GM10248 (cell line): ENCODE measurements at regions of chr17 and their contacts with region 1.

Region 1: GRCh38 chr17:32877164-32877764 is 340 bp upstream of the MYO1D start:
- DNase-seq: peak; percentile 96
- CTCF ChIP-seq: peak; percentile 89

Region 2: GRCh38 chr17:32486111-32486700 is 391.1 kb before region 1 on chr17:
- CTCF ChIA-PET with region 1: interaction called, 66 read pairs
- POLR2A ChIA-PET with region 1: no interaction called
- DNase-seq: peak; percentile 91
- CTCF ChIP-seq: no peak

Region 3: DNA sequence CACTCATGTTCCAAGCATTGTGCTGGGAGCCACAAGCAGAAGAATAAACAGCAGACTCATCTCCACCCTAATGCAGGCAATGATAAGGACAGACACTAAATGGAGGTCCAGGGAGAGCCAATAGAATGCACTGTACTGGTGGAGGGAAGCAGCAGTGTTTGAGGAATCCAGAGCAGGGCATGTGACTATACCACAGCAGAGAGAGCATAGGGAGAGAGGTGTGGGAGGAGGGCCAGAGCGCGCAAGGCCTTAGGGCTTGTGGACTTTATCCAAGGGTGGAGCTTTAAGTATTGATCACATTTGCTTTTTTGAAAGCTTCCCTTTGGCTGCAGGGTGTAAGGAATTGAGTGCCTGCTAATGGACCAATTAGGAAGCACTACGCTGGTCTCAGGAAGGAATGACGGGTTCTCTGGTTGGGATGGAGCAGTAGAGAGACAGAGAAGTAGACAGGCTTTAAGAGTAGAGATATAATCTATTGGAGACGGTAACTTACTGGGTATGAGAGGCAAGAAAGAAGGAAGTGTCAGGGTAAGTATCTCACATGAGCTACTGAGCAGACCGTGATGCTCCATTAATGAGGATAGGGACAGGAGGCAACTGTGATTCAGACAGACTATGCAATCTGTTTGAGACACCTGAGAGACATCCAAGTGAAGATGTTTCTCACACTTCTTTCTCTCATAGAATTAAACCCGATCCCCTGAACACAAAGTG is 82.6 kb before region 1 on chr17:
- CTCF ChIA-PET with region 1: interaction called, 64 read pairs
- POLR2A ChIA-PET with region 1: no interaction called
- DNase-seq: no peak
- CTCF ChIP-seq: no peak

Region 4: GRCh38 chr17:32828822-32829221 is 48.4 kb before region 1 on chr17:
- CTCF ChIA-PET with region 1: interaction called, 120 read pairs
- POLR2A ChIA-PET with region 1: interaction called, 8 read pairs
- DNase-seq: no peak
- CTCF ChIP-seq: no peak

Region 5: GRCh38 chr17:32859857-32860525 is 17.3 kb before region 1 on chr17:
- CTCF ChIA-PET with region 1: interaction called, 133 read pairs
- POLR2A ChIA-PET with region 1: interaction called, 3 read pairs
- DNase-seq: peak; percentile 33
- CTCF ChIP-seq: no peak

Region 6: DNA sequence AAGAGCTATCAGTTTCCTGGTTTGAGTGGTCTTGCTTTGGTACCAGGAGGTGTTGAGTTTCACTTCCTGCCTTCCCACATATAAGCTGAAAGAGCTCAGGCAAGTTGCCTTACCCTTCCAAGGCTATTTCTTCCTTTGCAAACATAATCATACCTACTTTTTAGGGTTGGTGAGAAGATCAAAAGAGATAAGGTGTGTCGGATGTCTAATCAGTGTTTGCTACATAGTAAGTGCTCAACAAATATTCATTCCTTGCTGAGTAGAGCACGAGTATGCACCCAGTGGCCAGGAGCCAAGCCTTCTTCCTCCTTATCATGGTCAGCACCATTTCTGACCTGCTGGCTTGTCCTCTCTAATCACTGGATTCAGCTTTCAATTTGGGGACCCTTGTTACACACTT is 38.0 kb after region 1 on chr17:
- CTCF ChIA-PET with region 1: interaction called, 24 read pairs
- POLR2A ChIA-PET with region 1: no interaction called
- DNase-seq: no peak
- CTCF ChIP-seq: no peak